ENCODE measurements at regions of chr10 and their contacts with region 1.

Region 1: DNA sequence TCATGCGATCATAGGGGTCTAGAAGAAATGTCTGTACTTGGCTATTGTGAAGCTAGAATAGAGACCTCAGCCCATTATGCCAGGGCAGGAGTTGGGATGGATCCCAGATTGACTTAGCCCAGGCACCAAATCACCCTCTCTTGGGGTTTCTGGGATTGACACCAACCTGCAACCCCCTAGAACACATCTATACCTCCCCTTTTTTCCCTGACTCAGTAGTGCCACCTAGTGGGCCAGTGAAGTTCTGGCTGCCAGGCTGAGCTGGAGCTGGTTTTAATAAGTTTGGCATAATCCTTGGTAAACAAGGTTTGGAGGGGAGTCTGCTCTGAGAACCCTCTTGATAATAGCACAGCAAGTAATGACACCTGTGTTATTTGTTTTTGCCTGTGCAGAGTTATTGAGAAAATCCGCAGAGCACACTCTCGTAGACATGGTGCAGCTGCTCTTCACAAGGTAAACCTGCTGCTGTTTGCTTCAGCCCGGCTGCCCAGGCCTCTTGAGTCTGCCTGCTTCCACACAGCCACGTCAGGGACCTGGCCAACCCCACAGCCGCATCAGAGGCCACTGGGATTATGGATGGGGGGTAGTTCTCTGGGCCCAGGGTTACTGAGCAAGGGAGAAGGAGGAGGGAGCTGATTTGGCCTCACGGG is 43.3 kb upstream of the NFKB2 start:
- DNase-seq: peak; percentile 85
- ATAC-seq: peak; percentile 88
- H3K4me3 Mint-ChIP-seq: no peak overlapping the region
- H3K27ac Mint-ChIP-seq: no peak overlapping the region
- H3K4me1 Mint-ChIP-seq: no peaks in the 10 kb centered on the region
- H3K27me3 Mint-ChIP-seq: no peaks in the 10 kb centered on the region

Region 2: GRCh38 chr10:102167861-102168260 is 184.3 kb before region 1 on chr10:
- CTCF ChIA-PET with region 1: interaction called, 57 read pairs
- POLR2A ChIA-PET with region 1: no interaction called
- intact Hi-C with region 1: loop called (anchors 1 kb)
- DNase-seq: no peak
- ATAC-seq: no peak
- H3K4me3 Mint-ChIP-seq: no peak overlapping the region
- H3K27ac Mint-ChIP-seq: no peak overlapping the region
- H3K4me1 Mint-ChIP-seq: peaks cover 4% of the 10 kb centered on the region
- H3K27me3 Mint-ChIP-seq: no peaks in the 10 kb centered on the region

Region 3: GRCh38 chr10:102245101-102245931 is 106.9 kb before region 1 on chr10 and contains the start of gene GBF1:
- CTCF ChIA-PET with region 1: interaction called, 833 read pairs
- POLR2A ChIA-PET with region 1: no interaction called
- intact Hi-C with region 1: no loop called
- DNase-seq: peak; percentile 94
- ATAC-seq: peak; percentile 90
- H3K4me3 Mint-ChIP-seq: peak within 1 kb of the TSS; percentile 98
- H3K27ac Mint-ChIP-seq: peak within 1 kb of the TSS; percentile 81
- H3K4me1 Mint-ChIP-seq: peaks cover 44% of the 10 kb centered on the region
- H3K27me3 Mint-ChIP-seq: peaks cover 18% of the 10 kb centered on the region
- total RNA-seq, gene GBF1: 33.1 to 37.5 TPM

Region 4: DNA sequence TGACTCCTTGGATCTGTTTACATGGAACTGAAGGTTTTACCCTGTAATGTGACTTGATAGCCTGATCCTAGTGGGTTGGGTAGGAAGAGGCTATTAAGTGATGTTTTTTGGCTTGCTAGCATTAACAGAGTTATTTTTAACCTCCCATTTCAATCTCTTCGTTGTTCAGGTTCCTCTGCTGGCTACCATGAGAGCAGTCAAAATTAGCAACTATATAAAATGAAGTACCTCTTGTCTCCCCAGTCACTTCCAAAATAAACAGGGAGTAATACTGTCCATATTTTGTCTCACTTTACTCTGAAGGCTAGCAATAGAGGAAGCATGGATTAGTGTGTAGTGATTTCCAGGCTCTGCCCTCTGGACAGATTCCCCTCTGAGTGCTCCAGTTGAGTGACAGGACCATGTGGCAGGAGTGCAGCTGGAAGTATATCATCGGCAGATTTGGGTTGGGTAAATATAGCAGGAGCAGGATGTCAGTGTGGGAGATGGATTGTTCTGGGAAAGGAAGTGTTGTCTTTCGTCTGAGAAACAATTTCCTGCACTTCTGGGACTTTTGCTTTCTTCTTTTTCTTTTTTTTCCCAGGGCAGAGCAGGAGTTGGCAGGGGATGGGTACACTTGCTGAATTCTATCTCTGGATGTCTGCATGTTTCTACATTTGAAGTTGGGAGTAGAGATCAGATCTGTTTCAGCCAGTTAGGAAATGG is 71.6 kb before region 1 on chr10:
- CTCF ChIA-PET with region 1: interaction called, 12 read pairs
- POLR2A ChIA-PET with region 1: no interaction called
- intact Hi-C with region 1: no loop called
- DNase-seq: no peak
- ATAC-seq: no peak
- H3K4me3 Mint-ChIP-seq: peak overlapping the region; percentile 0
- H3K27ac Mint-ChIP-seq: peak overlapping the region; percentile 72
- H3K4me1 Mint-ChIP-seq: peaks cover 59% of the 10 kb centered on the region
- H3K27me3 Mint-ChIP-seq: no peaks in the 10 kb centered on the region

Region 5: GRCh38 chr10:102327641-102328040 is 24.6 kb before region 1 on chr10:
- CTCF ChIA-PET with region 1: interaction called, 13 read pairs
- POLR2A ChIA-PET with region 1: no interaction called
- intact Hi-C with region 1: no loop called
- DNase-seq: no peak
- ATAC-seq: no peak
- H3K4me3 Mint-ChIP-seq: no peak overlapping the region
- H3K27ac Mint-ChIP-seq: no peak overlapping the region
- H3K4me1 Mint-ChIP-seq: peaks cover 8% of the 10 kb centered on the region
- H3K27me3 Mint-ChIP-seq: no peaks in the 10 kb centered on the region